Activated naive CD4-positive, alpha-beta T cell treated with anti-CD3 and anti-CD28 coated beads for 36 hours (primary cell): ENCODE measurements at regions of chr1 and their contacts with region 1.

Region 1: GRCh38 chr1:167687919-167688519 is 33.8 kb upstream of the MPZL1 start:
- DNase-seq: peak; percentile 94
- H3K4me3 Mint-ChIP-seq: no peak overlapping the region
- H3K27ac Mint-ChIP-seq: peak overlapping the region; percentile 62
- H3K4me1 Mint-ChIP-seq: peaks cover 11% of the 10 kb centered on the region
- H3K27me3 Mint-ChIP-seq: no peaks in the 10 kb centered on the region

Region 2: GRCh38 chr1:166814611-166815010 is 873.4 kb before region 1 on chr1:
- CTCF ChIA-PET with region 1: no interaction called
- intact Hi-C with region 1: no loop called
- DNase-seq: no peak
- H3K4me3 Mint-ChIP-seq: no peak overlapping the region
- H3K27ac Mint-ChIP-seq: no peak overlapping the region
- H3K4me1 Mint-ChIP-seq: no peaks in the 10 kb centered on the region
- H3K27me3 Mint-ChIP-seq: peaks cover 6% of the 10 kb centered on the region

Region 3: DNA sequence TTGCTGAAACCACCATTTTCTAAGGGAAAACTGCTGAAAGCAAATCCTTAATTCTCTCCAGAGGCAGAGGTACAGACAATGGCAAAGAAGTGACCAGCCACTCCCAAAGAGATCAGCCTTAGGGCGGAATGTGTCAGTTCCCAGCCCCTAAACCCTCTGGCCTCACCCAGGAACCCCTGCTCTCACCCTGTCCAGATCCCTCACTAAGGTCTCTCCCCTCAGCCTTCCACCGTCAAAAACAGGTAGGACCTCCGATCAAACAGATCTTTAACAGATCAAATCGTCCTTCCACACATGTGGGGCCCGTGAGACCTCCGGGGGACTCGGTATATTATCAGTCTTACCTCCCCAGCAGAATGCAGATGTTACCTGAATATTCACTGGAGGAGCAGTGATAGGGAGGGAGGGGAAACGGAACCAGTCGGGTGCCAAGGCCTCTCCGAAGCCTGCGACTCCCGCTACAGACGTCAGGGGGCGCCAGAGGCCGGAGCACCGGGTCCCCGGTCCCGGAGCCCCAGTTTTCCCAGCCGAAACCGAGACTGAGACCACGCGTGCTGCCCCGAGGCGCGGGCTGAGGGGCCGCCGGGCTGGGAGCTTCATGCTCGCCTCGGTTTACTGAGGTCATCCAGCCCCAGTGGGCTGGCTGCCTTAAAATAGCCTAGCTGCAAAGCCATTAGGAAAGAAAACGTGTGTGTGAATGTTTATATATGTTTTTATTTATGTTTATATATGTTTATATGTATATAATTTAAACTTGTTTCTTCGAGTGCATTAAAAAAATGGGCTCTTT is 621.5 kb before region 1 on chr1:
- CTCF ChIA-PET with region 1: no interaction called
- intact Hi-C with region 1: loop called (anchors 5 kb)
- DNase-seq: peak; percentile 82
- H3K4me3 Mint-ChIP-seq: no peak overlapping the region
- H3K27ac Mint-ChIP-seq: no peak overlapping the region
- H3K4me1 Mint-ChIP-seq: peaks cover 2% of the 10 kb centered on the region
- H3K27me3 Mint-ChIP-seq: no peaks in the 10 kb centered on the region

Region 4: DNA sequence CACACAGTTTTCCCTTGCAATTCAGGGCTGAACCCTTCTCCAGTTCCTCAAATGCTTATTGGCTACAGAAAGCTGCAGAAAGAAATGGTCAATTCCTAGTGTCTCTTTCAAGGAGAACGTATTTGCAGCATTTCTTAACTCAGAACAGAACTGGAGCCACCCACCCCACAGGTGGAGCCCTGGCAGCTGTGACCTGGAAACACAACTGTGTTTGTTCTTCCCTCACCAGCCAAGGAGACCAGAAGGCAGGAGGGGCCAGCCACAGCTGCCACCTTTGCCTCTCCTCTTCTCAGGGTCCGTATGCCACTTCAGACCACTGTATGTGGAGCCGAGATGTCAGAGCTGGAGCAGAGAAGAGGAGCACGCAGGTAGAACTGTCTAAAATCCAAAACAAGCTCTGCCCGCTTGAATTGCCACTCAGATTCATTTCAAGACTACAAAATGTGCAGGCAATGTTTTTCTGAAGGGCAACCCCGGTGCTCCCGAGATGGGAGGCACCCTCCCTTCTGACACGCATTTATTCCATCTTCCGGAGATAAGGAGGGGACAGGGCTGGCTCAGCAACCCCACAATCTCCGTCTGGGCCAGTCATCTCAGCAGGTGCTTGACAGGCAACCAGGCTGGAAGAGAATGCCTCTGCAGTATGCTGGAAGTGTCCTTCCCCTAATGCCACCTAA is 186.4 kb before region 1 on chr1:
- CTCF ChIA-PET with region 1: no interaction called
- intact Hi-C with region 1: no loop called
- DNase-seq: peak; percentile 73
- H3K4me3 Mint-ChIP-seq: peak overlapping the region; percentile 27
- H3K27ac Mint-ChIP-seq: peak overlapping the region; percentile 43
- H3K4me1 Mint-ChIP-seq: peaks cover 95% of the 10 kb centered on the region
- H3K27me3 Mint-ChIP-seq: no peaks in the 10 kb centered on the region

Region 5: DNA sequence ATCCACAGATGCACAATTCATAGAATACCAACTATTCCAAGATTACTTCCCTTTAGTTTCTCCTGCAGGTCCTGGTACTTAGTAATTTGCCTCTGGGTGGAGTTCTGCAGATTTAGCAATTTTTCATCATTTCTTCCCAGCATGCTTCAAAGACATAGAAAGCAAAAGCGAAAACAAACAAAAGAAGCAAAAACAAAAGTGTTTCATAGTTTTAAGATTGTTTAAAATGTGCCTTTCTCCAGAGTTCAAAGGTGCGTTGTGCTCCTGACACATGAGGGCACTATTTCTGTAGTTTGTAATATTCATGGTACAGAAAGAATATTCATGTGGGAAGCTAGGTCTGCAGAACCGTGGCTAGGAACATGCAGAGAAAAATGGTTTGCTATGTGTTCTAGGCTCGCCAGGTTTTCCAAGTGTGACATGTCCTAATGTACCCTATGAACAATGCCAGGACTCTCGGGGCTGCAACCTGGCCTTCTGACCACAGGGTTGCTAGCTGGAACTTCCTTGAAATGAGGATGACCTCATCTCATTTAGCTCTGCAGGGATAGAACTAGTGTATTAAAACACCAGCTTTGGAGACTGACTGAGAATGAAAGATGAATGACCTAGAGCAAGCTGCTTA is 88.0 kb before region 1 on chr1:
- CTCF ChIA-PET with region 1: interaction called, 148 read pairs
- intact Hi-C with region 1: loop called (anchors 1 kb)
- DNase-seq: peak; percentile 71
- H3K4me3 Mint-ChIP-seq: peak overlapping the region; percentile 45
- H3K27ac Mint-ChIP-seq: peak overlapping the region; percentile 67
- H3K4me1 Mint-ChIP-seq: peaks cover 39% of the 10 kb centered on the region
- H3K27me3 Mint-ChIP-seq: no peaks in the 10 kb centered on the region

Region 6: GRCh38 chr1:167641786-167642500 is 46.1 kb before region 1 on chr1:
- CTCF ChIA-PET with region 1: interaction called, 43 read pairs
- intact Hi-C with region 1: loop called (anchors 1 kb)
- DNase-seq: no peak
- H3K4me3 Mint-ChIP-seq: no peak overlapping the region
- H3K27ac Mint-ChIP-seq: peak overlapping the region; percentile 80
- H3K4me1 Mint-ChIP-seq: peaks cover 71% of the 10 kb centered on the region
- H3K27me3 Mint-ChIP-seq: no peaks in the 10 kb centered on the region

Region 7: DNA sequence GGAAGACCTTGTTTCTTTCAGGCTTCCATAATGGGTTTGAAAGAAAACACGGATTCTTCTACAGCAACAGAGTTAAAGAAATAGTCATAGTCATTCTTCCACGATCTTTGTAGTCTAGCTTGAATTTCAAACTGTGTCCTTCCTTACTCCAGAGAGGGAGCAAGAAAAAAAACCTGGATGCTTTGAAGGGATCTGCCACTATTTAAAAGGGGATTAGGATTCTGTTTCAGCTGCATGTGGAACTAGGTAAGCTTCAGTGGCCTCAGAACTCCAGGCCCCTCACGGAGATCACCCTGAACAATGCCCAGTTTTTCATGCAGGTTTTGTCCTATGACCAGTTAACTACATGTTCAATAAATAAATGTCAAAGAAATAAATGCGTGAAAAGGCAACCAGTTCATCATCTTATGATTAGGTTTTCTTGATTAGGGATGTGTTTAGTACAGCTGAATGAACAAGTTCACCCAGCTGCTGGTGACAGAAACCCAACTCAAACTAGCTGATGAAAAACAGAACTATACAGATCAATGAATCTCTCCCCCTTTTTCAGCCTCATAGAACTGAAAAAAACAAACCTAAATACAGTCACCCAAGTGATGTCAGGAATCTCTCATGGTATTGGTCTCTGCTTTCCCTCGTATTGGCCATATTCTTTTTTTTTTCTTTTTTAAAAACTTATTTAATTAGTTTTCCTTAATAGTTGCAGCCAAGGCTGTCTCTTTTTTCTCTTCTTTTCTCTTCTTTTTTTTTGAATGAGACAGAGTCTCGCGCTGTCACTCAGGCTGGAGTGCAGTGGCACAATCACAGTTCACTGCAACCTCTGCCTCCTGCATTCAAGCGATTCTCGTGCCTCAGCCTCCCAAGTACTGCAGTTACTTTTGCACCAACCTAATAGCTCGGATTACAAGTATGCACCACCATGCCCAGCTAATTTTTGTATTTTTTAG is 19.2 kb after region 1 on chr1:
- CTCF ChIA-PET with region 1: interaction called, 17 read pairs
- intact Hi-C with region 1: no loop called
- DNase-seq: no peak
- H3K4me3 Mint-ChIP-seq: no peak overlapping the region
- H3K27ac Mint-ChIP-seq: peak overlapping the region; percentile 47
- H3K4me1 Mint-ChIP-seq: peaks cover 24% of the 10 kb centered on the region
- H3K27me3 Mint-ChIP-seq: no peaks in the 10 kb centered on the region